GM10248 (cell line): ENCODE measurements at regions of chr2 and their contacts with region 1.

Region 1: GRCh38 chr2:219543601-219544358 is at the starts of genes CHPF and TMEM198:
- DNase-seq: peak; percentile 99
- CTCF ChIP-seq: no peak

Region 2: GRCh38 chr2:219452838-219453317 is 90.9 kb before region 1 on chr2:
- CTCF ChIA-PET with region 1: interaction called, 10 read pairs
- POLR2A ChIA-PET with region 1: no interaction called
- DNase-seq: no peak
- CTCF ChIP-seq: no peak

Region 3: GRCh38 chr2:219530048-219530963 is 13.5 kb before region 1 on chr2:
- CTCF ChIA-PET with region 1: interaction called, 153 read pairs
- POLR2A ChIA-PET with region 1: no interaction called
- DNase-seq: peak; percentile 91
- CTCF ChIP-seq: peak; percentile 88

Region 4: GRCh38 chr2:219597552-219598307 is 54.0 kb after region 1 on chr2 and contains the start of gene STK11IP:
- CTCF ChIA-PET with region 1: interaction called, 10 read pairs
- POLR2A ChIA-PET with region 1: interaction called, 3 read pairs
- DNase-seq: peak; percentile 96
- CTCF ChIP-seq: no peak

Region 5: DNA sequence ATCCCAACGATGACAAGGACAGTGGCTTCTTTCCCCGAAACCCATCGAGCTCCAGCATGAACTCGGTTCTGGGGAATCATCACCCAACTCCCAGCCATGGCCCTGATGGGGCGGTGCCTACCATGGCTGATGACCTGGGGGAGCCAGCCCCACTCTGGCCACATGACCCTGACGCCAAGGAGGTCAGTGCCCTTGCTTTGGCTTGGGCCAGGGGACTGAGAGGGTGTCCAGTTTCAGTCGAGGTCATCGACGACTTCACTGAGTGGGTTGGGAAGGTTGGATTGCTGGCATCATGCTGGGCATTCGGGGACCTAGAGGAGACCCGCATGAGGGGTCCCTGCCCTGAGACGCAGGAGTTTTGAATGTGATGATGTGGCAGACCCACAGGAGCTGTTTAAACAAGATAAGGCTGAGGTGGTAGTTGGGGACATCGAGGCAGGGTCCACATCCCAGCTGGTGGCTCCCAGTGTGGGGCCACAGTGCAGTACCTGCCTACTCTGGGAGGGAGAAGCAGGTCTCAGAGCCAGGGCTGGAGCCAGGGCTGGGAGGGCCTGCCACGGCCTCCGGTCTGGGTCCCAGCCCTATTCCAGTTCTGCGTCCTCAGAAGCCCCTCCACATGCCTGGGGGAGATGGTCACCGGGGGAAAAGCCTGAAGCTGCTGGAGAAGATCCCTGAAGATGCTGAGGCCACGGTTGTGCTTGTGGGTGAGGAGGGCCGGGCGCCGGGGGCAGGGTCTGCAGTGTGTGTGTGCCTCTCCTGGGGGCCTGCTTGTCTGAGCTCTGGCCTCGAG is 89.7 kb after region 1 on chr2:
- CTCF ChIA-PET with region 1: interaction called, 10 read pairs
- POLR2A ChIA-PET with region 1: no interaction called
- DNase-seq: no peak
- CTCF ChIP-seq: no peak

Region 6: GRCh38 chr2:219689676-219690628 is 146.2 kb after region 1 on chr2:
- CTCF ChIA-PET with region 1: interaction called, 80 read pairs
- POLR2A ChIA-PET with region 1: no interaction called
- DNase-seq: peak; percentile 70
- CTCF ChIP-seq: peak; percentile 68

Region 7: DNA sequence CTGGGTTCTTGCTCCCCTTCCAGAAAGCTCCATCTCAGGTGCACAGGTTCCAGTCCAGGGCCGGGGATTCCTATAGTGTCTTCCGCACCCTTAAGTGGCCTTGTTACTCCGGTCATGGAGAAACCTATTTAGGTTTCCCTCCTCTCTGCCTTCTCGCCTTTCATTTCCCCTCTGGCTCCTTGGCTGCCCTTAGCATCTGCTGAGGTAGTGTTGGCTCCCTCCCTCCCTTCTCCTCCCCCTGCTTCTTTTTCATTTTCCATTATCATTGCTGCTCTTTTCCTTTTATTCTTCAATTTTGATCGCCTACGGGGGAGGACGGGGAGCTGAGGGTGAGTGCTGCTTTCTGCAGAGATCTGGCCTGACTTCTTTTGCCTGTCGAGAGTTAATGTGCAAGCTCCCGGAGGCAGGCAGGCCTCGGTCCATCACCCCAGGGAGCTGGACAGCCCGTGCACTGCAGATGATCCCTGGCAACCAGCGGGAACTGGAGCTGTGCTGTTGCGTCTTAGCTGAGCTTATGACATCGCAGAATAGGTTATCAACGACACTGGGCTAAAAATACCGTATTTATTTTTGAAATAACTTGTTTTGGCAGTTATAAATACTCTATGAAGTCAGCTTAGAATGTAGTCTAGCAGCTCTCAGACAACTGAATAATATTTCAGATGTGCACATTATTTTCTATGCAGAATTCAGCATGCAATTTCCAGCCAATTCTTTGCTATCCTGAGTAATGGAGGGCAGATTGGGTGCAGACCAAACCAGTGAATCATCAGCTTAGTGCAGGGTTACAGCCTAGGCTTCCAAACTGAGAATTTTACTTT is 225.5 kb after region 1 on chr2:
- CTCF ChIA-PET with region 1: no interaction called
- POLR2A ChIA-PET with region 1: no interaction called
- DNase-seq: no peak
- CTCF ChIP-seq: no peak